AG04449 (cell line): ENCODE measurements at regions of chr19 and their contacts with region 1.

Region 1: GRCh38 chr19:10251792-10252694 is at the start of gene MRPL4:
- DNase-seq: peak; percentile 90
- H3K4me3 ChIP-seq: peak within 1 kb of the TSS; percentile 99
- CTCF ChIP-seq: no peak

Region 2: GRCh38 chr19:9934132-9934950 is 317.7 kb before region 1 on chr19:
- CTCF ChIA-PET with region 1: interaction called, 93 read pairs
- POLR2A ChIA-PET with region 1: no interaction called
- DNase-seq: no peak
- H3K4me3 ChIP-seq: peak overlapping the region; percentile 63
- CTCF ChIP-seq: peak; percentile 95

Region 3: DNA sequence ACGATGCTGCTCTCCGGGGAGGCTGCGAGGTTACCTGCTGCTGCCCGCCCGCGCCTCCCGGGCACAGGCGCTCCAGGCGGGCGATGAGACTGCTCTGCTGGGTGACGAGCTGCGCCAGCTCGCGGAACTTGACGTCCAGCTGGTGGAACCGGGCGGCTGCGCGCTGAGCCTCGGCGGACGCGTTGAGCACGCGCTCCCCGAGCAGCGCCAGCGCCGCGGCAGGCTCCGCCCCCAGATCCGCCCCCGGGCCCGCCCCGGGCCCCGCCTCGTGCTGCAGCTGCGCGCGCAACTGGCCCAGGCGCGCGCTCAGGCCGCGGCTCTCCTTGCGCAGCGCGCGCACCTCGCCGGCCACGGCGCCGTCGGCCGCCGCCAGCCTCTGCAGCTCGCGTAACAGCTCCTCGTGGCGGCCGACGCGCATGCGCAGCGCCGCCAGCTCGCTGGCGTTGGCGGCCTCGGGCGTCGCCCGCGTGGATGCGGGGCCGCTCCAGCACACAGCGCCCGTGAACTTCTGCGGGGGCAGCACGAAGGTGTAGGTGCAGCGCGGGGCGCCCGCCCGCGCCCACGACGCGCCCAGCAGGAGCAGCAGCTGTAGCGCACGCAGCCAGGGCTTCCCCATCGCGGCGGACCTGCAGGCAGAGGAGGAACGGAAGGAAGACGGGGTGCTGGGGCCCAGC is 156.0 kb before region 1 on chr19:
- CTCF ChIA-PET with region 1: interaction called, 68 read pairs
- POLR2A ChIA-PET with region 1: no interaction called
- DNase-seq: no peak
- H3K4me3 ChIP-seq: peak overlapping the region; percentile 59
- CTCF ChIP-seq: no peak

Region 4: DNA sequence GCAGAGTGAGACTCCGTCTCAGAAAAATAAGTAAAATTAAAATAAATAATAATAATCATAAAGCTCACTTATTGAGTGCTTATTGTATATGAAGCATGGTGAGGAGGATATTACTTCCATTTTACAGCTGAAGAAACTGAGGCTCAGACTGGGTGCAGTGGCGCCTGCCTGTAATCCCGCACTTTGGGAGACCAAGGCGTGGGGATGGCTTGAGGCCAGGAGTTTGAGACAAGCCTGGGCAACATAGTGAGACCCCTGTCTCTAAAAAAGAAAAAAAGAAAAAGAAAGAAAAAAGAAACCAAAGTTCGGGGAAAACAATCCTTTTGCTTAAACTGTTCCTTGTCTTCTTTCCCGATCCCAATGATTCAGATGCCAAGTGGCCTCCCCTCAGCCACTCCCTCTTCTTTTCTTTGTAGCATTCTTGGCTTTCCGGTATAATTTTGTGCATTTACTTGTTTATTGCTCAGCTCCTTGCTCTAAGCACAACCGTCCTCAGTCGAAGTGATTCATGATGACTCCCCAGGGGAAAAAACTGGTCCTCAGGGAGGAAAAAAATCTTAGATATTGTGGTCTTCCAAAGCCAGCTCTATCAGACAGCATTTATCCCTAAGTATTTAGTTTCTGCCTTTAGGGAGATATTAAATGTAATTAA is 131.4 kb before region 1 on chr19:
- CTCF ChIA-PET with region 1: interaction called, 59 read pairs
- POLR2A ChIA-PET with region 1: interaction called, 3 read pairs
- DNase-seq: peak; percentile 55
- H3K4me3 ChIP-seq: no peak overlapping the region; the same call in 1 of the 2 replicates
- CTCF ChIP-seq: no peak

Region 5: DNA sequence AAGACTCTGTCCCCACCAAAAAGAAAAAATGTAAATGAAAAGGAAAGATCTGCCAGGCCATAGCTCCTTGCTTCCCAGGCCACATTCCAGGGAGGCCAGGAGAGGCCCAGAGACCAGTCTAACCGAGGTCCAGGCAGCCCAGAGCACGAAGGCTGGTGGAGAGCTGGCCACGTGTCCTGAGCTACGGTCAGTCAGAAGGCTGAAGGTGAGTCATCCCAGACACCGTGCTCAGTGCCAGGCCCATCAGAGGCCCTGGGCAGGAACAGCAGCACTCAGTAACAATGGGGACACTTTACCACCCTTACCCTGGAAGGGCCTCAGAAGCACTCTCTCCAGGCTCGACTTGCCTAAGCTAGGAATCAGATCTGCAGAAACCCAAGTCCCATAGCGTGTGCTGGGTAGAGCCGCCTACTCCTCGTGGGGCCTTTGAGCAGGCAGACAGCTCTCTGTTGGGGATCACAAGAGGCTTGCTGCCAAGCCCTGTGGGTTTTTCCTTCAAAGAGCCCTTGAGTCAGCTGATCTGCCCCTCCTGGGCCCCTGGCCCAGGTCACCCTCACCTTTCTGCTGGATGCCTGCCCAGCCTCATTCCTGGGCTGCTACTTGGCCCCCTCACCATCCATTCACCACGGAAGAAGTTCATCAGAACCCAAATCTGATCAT is 45.7 kb before region 1 on chr19:
- CTCF ChIA-PET with region 1: interaction called, 10 read pairs
- POLR2A ChIA-PET with region 1: no interaction called
- DNase-seq: no peak
- H3K4me3 ChIP-seq: no peak overlapping the region
- CTCF ChIP-seq: no peak

Region 6: GRCh38 chr19:10238172-10238783 is 13.8 kb before region 1 on chr19:
- CTCF ChIA-PET with region 1: interaction called, 22 read pairs
- POLR2A ChIA-PET with region 1: no interaction called
- DNase-seq: no peak
- H3K4me3 ChIP-seq: no peak overlapping the region
- CTCF ChIP-seq: no peak

Region 7: DNA sequence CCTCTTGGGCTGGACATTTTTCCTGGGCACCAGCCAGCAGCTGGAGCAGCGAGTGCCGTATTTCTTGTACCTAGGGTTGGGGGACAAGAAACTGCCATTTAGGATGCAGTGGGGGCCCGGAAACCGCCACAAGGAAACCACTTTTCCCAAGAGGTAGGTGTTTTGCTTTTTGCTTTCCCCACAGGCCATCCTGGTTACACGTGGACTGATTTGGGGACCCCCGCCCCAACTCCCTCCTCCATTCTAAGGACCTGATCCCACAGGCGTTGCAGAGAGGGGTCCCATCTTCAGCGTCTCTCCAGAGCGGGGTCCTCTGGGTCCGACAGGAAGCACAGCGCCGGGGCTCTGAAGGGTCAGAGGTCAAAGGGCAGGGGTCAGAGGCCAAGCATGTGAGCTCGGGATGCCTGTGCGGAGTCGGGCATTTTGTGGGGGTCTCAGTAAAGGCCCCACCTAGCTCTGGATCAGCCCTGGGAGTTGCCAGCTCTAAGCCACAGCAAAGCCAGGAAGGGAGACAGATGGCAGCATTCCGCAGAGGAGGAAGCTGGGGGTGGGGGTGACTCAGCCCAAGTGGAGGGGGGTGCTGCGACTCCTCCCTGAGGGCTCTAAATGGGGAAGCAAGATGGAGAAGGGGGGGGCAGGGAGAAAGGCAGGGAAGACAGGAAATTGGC is 53.2 kb after region 1 on chr19:
- CTCF ChIA-PET with region 1: no interaction called
- POLR2A ChIA-PET with region 1: no interaction called
- DNase-seq: no peak
- H3K4me3 ChIP-seq: no peak overlapping the region
- CTCF ChIP-seq: no peak

Region 8: GRCh38 chr19:10505583-10506229 is 253.7 kb after region 1 on chr19:
- CTCF ChIA-PET with region 1: no interaction called
- POLR2A ChIA-PET with region 1: no interaction called
- DNase-seq: no peak
- H3K4me3 ChIP-seq: no peak overlapping the region
- CTCF ChIP-seq: peak; percentile 85